IMR-90 (cell line): ENCODE measurements at regions of chr11 and their contacts with region 1.

Region 1: DNA sequence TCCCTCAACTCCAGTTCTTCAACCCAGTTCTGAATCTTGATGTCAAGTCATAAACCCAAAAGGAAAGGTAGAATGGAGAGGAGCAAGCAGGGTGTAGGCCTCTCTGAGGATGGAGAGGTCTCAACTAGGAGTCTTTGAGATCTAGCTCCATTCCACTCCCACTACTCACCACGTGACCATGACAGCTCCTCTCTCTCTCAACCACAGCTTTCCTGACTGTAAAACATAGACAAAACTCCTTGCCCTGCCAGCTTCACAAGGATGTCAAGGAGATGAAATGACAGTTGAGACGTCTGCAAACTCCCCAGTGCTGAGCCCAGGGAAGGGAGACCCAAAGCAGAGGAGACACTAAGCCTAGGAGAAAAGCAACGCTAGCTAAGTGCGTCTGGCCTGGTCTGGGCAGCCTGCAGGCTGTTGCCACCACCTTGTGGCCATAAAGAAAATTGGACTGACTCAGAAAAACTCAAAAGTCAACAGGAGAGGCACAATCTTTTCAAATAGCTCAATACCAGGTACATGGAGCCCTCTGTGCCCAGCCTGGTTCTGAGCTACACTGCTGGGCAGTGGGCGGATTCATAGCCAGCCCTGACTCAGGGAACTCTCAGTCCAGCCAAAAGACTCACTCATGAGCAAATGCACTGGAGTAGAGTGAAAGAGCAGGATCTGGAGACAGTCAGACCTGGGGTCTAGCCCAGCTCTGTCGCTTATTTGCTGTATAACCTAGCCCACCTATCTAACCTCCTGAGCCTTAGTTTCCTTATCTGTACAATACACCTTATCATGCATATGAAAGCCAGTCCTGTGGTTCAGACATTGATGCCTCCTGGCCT is 3.4 kb downstream of the CLPB start:
- DNase-seq: peak; percentile 59
- ATAC-seq: peak; percentile 61
- H3K4me3 ChIP-seq: no peak overlapping the region
- H3K27ac ChIP-seq: no peak overlapping the region
- H3K4me1 ChIP-seq: peaks cover 3% of the 10 kb centered on the region; the same call in 1 of the 2 replicates
- H3K27me3 ChIP-seq: no peaks in the 10 kb centered on the region
- CTCF ChIP-seq: peak; percentile 89
- POLR2A ChIP-seq: no peak
- RAD21 ChIP-seq: peak; percentile 92

Region 2: GRCh38 chr11:72024069-72024754 is 406.7 kb before region 1 on chr11:
- CTCF ChIA-PET with region 1: interaction called, 17 read pairs
- POLR2A ChIA-PET with region 1: no interaction called
- dilution Hi-C with region 1: no loop called
- in situ Hi-C with region 1: loop called (anchors 5 kb)
- intact Hi-C with region 1: loop called (anchors 1 kb)
- DNase-seq: no peak
- ATAC-seq: no peak
- H3K4me3 ChIP-seq: no peak overlapping the region
- H3K27ac ChIP-seq: no peak overlapping the region; the same call in 1 of the 2 replicates
- H3K4me1 ChIP-seq: peaks cover 9% of the 10 kb centered on the region
- H3K27me3 ChIP-seq: no peaks in the 10 kb centered on the region
- CTCF ChIP-seq: no peak
- POLR2A ChIP-seq: no peak
- RAD21 ChIP-seq: no peak

Region 3: DNA sequence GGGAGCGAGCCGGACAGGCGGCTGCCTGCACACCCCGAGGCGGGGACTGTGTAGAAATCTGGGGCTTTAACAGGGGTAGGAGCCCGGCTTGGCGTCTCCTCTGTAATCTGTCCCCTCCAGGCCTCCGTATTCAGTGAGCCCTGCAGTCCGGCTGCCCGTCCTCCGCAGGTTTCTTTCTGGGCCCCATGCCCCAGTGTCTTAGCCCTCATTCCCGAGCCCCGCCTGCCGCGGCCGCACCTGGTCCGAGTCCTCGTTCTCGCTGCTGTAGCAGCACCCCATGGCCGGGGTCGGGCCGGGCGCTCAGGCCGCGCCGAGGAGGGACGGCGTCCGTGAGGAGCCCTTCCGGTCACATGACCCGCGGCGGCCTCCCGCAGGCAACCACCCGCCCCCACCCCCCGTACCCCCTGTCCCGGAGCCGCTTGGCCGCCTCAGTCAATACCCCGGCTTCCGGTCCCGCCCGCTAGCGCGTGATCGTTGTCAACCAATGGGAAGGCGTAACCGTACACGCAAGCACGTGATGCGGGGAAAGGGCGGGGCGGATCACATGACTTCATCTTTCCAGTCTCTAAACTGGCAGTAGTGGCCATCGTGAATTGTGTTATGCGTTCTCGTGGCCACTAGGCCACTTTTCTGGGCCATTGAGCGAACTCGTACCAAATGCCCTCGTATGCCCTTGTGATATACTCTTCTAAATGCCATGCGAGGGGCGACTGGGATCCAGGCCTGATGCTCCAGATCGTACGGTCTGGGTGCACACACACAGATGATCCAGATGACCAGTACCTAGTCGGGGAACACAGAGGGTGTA is 327.8 kb before region 1 on chr11 and contains the start of gene LAMTOR1:
- CTCF ChIA-PET with region 1: no interaction called
- POLR2A ChIA-PET with region 1: no interaction called
- dilution Hi-C with region 1: no loop called
- in situ Hi-C with region 1: no loop called
- intact Hi-C with region 1: loop called (anchors 1 kb)
- DNase-seq: peak; percentile 99
- ATAC-seq: peak; percentile 95
- H3K4me3 ChIP-seq: peak within 1 kb of the TSS; percentile 75
- H3K27ac ChIP-seq: peak within 1 kb of the TSS; percentile 94
- H3K4me1 ChIP-seq: peaks cover 10% of the 10 kb centered on the region
- H3K27me3 ChIP-seq: no peaks in the 10 kb centered on the region
- CTCF ChIP-seq: peak; percentile 48
- POLR2A ChIP-seq: peak; percentile 93
- RAD21 ChIP-seq: peak; percentile 37
- total RNA-seq, gene LAMTOR1: 118 and 137 TPM in 2 replicates

Region 4: DNA sequence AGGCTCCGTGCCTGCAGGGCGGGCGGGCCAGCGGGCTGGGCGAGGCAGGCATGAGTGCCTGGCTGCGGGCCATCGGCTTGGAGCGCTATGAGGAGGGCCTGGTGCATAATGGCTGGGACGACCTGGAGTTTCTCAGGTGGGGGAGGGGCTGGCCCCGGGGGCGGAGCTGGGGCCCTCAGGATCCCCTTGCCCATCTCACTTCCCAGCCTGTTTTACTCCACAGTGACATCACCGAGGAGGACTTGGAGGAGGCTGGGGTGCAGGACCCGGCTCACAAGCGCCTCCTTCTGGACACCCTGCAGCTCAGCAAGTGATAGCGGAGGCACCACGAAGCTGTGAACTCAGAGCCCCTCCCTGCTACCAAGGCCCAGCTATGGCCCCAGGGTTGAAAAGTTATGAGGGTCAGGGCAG is 192.9 kb before region 1 on chr11:
- CTCF ChIA-PET with region 1: no interaction called
- POLR2A ChIA-PET with region 1: no interaction called
- dilution Hi-C with region 1: no loop called
- in situ Hi-C with region 1: no loop called
- intact Hi-C with region 1: loop called (anchors 2 kb)
- DNase-seq: peak; percentile 67
- ATAC-seq: peak; percentile 50
- H3K4me3 ChIP-seq: no peak overlapping the region
- H3K27ac ChIP-seq: no peak overlapping the region
- H3K4me1 ChIP-seq: peaks cover 2% of the 10 kb centered on the region; the same call in 1 of the 2 replicates
- H3K27me3 ChIP-seq: peaks cover 28% of the 10 kb centered on the region
- CTCF ChIP-seq: peak; percentile 66
- POLR2A ChIP-seq: no peak
- RAD21 ChIP-seq: peak; percentile 71

Region 5: GRCh38 chr11:72352859-72353551 is 78.0 kb before region 1 on chr11:
- CTCF ChIA-PET with region 1: interaction called, 9 read pairs
- POLR2A ChIA-PET with region 1: no interaction called
- dilution Hi-C with region 1: no loop called
- in situ Hi-C with region 1: no loop called
- intact Hi-C with region 1: loop called (anchors 5 kb)
- DNase-seq: peak; percentile 85
- ATAC-seq: peak; percentile 96
- H3K4me3 ChIP-seq: no peak overlapping the region
- H3K27ac ChIP-seq: no peak overlapping the region
- H3K4me1 ChIP-seq: peaks cover 12% of the 10 kb centered on the region
- H3K27me3 ChIP-seq: no peaks in the 10 kb centered on the region
- CTCF ChIP-seq: peak; percentile 69
- POLR2A ChIP-seq: no peak
- RAD21 ChIP-seq: peak; percentile 85

Region 6: DNA sequence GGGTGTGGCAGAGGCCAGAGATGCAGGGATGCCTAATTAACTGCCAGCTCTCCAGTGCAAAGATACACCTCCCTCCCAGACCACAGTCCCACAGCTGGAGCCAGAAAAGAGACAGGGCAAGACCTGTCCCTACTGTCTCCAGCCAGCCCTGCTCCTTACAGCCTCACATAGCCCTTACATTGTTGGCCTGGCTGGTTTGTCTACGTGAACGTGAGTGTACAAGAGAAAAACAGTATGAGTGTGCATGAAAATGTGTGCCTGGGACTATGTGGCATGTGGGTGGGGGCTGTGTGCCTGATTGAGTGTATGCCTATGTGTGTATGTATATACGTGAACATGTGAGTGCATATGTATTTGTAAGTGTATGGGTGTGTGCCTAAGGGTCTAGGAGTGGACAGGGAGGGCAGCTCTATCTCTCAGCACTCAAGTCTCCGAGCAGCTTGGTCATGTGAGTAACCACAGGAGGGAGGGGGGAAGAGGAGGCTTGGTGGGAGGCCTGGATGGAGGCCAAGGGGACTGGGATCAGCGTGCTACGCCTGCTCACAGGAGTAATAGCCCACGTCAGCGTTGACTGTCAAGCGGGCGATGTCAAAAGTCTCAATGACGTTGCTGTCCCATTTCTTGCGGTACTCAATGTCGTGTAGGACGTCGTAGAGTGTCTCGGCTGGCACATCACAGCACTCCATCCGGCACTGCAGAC is 327.9 kb after region 1 on chr11:
- CTCF ChIA-PET with region 1: no interaction called
- POLR2A ChIA-PET with region 1: no interaction called
- dilution Hi-C with region 1: no loop called
- in situ Hi-C with region 1: no loop called
- intact Hi-C with region 1: no loop called
- DNase-seq: peak; percentile 96
- ATAC-seq: peak; percentile 76
- H3K4me3 ChIP-seq: no peak overlapping the region
- H3K27ac ChIP-seq: no peak overlapping the region
- H3K4me1 ChIP-seq: peaks cover 13% of the 10 kb centered on the region
- H3K27me3 ChIP-seq: no peaks in the 10 kb centered on the region
- CTCF ChIP-seq: no peak
- POLR2A ChIP-seq: no peak
- RAD21 ChIP-seq: no peak